RWPE1 (cell line): ENCODE measurements at regions of chr15 and their contacts with region 1.

Region 1: GRCh38 chr15:99275525-99276128 is 24.3 kb downstream of the LRRC28 start:
- DNase-seq: no peak
- H3K27ac ChIP-seq: no peak overlapping the region
- CTCF ChIP-seq: no peak

Region 2: DNA sequence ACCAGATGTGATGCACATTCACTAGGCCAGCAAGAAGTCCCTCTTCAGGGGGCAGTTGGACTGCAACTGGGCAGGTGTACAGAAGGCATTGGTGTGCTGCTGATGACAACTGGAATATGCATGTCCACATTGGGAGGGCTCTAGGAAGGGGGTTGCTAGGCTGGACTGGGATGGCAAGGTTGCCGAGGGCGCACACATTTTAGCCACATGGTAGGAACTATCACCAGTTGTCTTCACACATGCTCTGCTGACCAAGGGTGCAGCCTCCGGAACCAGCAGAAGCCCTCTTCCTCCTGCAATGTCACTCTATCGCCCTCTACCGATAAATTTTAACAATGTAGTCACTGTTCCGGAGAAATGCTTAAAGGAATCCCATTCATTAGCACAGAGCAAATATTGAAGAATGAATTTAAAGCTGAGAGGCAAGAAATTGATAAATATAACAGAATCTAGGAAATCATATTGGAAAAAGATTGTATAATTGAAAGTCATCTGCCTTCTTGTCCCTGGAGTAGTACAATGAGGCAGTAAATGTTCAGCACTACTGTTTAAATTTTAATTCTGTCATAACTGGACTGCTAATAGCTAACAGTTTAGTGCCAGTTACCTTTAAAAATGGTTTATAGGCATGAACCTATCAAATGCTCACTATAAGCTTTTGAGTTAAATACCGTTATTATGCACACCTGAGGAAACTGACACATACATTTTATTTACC is 480.2 kb after region 1 on chr15:
- CTCF ChIA-PET with region 1: interaction called, 13 read pairs
- POLR2A ChIA-PET with region 1: no interaction called
- DNase-seq: peak; percentile 69
- H3K27ac ChIP-seq: no peak overlapping the region
- CTCF ChIP-seq: peak; percentile 94